IMR-90 (cell line): ENCODE measurements at regions of chr19 and their contacts with region 1.

Region 1: DNA sequence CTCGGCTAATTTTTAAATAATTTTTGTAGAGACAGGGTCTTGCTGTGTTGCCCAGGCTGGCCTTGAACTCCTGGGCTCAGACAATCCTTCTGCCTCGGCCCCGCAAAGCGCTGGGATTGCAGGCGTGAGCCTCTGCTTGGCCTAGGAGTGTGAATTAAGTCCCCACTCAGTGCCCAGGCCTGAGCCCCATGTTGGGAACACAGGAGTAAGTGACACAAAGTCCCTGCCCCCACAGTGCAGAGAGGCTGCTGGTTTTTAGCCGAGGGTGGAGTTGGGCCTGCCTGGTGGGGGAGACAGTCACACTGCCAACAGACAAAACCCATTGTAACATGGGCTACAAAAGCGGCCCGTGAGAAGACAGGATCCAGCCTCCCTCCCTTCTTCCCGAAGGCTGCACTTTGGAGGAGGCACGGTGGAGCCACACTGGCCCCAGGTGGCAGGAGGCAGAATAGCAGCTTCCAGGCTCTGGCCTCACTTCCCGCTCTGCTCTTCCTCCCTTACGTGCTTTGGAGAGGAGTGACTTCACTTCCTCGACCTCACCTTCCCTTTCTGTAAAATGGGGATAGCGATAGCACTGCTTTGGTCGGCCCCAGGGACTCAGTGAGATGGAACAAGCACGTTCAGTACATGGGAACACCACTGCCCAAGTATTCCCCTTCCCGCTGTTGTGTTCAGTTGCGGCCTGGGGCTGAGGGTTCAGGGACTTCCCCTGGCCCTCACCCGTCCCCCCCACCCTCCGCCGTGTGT is 15.2 kb upstream of the EHD2 start:
- DNase-seq: peak; percentile 76
- ATAC-seq: peak; percentile 97
- H3K4me3 ChIP-seq: no peak overlapping the region
- H3K27ac ChIP-seq: no peak overlapping the region
- H3K4me1 ChIP-seq: no peaks in the 10 kb centered on the region
- H3K27me3 ChIP-seq: no peaks in the 10 kb centered on the region
- CTCF ChIP-seq: peak; percentile 99
- POLR2A ChIP-seq: 0 out of 2 replicates have a peak, but pooled peaks have one; percentile 48
- RAD21 ChIP-seq: peak; percentile 100

Region 2: GRCh38 chr19:47305309-47305751 is 392.7 kb before region 1 on chr19:
- CTCF ChIA-PET with region 1: no interaction called
- POLR2A ChIA-PET with region 1: no interaction called
- dilution Hi-C with region 1: no loop called
- in situ Hi-C with region 1: no loop called
- intact Hi-C with region 1: loop called (anchors 5 kb)
- DNase-seq: peak; percentile 90
- ATAC-seq: peak; percentile 98
- H3K4me3 ChIP-seq: peak overlapping the region; percentile 22; the same call in 1 of the 2 replicates
- H3K27ac ChIP-seq: 0 out of 2 replicates have a peak overlapping the region, but pooled peaks have one; percentile 22
- H3K4me1 ChIP-seq: no peaks in the 10 kb centered on the region
- H3K27me3 ChIP-seq: no peaks in the 10 kb centered on the region
- CTCF ChIP-seq: peak; percentile 88
- POLR2A ChIP-seq: no peak
- RAD21 ChIP-seq: peak; percentile 52

Region 3: DNA sequence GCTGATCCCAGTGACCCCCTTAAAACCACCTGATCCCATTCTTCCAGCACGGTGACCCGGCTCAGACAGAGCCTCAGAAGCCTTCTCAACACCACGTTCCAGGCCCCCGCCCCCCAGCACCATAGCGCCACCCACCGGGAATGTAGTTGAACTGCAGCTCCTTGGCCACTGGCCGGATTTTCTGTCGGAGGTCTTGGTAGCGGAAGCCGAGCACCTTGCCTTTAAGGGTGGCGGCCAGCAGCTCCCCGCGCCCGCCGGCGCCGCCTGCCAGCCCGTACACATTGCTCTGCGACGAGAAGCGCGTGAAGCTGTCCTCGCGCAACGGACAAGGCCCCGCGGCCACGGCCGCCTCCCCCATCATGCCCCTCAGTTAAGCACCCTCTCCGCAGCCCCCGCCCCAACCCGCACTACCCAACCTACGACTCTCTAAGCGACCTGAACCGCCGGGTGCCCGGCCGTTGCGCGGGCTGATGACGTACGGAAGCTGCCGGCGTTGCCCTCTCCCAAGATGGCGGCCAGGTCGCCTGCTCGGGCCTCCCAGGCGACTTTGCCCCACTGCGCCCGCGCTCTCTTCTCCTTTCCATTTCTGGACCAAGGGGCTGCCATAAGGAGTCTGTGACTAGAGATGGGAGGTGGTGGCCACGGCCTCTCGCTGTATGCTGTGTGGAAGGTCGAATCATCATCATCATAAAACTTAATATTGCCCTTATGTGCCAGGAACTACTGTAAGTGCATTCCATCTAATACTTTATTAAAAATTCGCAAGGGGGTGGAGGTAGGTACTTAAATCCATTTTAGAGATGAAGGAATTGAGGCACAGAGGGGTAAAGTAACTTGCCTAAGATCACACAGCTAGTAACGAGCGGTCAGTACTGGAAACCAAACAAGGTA is 214.0 kb before region 1 on chr19 and contains the start of gene KPTN:
- CTCF ChIA-PET with region 1: no interaction called
- POLR2A ChIA-PET with region 1: no interaction called
- dilution Hi-C with region 1: no loop called
- in situ Hi-C with region 1: no loop called
- intact Hi-C with region 1: loop called (anchors 1 kb)
- DNase-seq: peak; percentile 90
- ATAC-seq: peak; percentile 91
- H3K4me3 ChIP-seq: peak within 1 kb of the TSS; percentile 64
- H3K27ac ChIP-seq: peak within 1 kb of the TSS; percentile 97
- H3K4me1 ChIP-seq: peaks cover 2% of the 10 kb centered on the region; the same call in 1 of the 2 replicates
- H3K27me3 ChIP-seq: no peaks in the 10 kb centered on the region
- CTCF ChIP-seq: peak; percentile 96
- POLR2A ChIP-seq: peak; percentile 77
- RAD21 ChIP-seq: peak; percentile 57
- total RNA-seq, gene KPTN: 3.9 and 4.1 TPM in 2 replicates

Region 4: GRCh38 chr19:47514869-47515588 is 183.0 kb before region 1 on chr19 and contains the start of gene NAPA:
- CTCF ChIA-PET with region 1: interaction called, 3 read pairs
- POLR2A ChIA-PET with region 1: interaction called, 3 read pairs
- dilution Hi-C with region 1: no loop called
- in situ Hi-C with region 1: no loop called
- intact Hi-C with region 1: loop called (anchors 1 kb)
- DNase-seq: peak; percentile 100
- ATAC-seq: peak; percentile 97
- H3K4me3 ChIP-seq: peak within 1 kb of the TSS; percentile 87
- H3K27ac ChIP-seq: peak within 1 kb of the TSS; percentile 90
- H3K4me1 ChIP-seq: peaks cover 18% of the 10 kb centered on the region
- H3K27me3 ChIP-seq: peaks cover 2% of the 10 kb centered on the region; the same call in 1 of the 2 replicates
- CTCF ChIP-seq: no peak; the same call in 1 of the 2 replicates
- POLR2A ChIP-seq: peak; percentile 96
- RAD21 ChIP-seq: peak; percentile 68
- total RNA-seq, gene NAPA: 51.7 and 76.4 TPM in 2 replicates

Region 5: DNA sequence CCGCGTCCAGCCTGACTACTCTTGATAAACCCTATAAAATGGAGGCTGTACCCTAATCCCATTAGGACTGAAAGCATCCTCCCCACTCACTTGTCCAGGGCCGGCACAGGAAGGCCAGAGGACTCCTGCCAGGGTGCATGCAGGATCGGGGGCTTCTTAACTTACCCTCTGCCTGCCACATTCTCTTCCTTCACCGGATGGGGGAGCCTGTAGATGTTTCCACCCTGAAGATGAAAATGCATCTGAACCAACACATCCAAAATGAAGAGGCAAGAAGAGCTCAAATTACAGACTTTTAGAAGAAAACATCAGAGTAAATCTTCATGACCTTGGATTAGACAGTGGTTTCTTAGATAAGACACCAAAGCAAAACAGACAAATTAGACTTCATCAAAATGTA is 157.3 kb before region 1 on chr19:
- CTCF ChIA-PET with region 1: no interaction called
- POLR2A ChIA-PET with region 1: no interaction called
- dilution Hi-C with region 1: no loop called
- in situ Hi-C with region 1: no loop called
- intact Hi-C with region 1: loop called (anchors 1 kb)
- DNase-seq: peak; percentile 51
- ATAC-seq: peak; percentile 84
- H3K4me3 ChIP-seq: no peak overlapping the region
- H3K27ac ChIP-seq: no peak overlapping the region
- H3K4me1 ChIP-seq: peaks cover 3% of the 10 kb centered on the region
- H3K27me3 ChIP-seq: peaks cover 31% of the 10 kb centered on the region
- CTCF ChIP-seq: peak; percentile 44
- POLR2A ChIP-seq: no peak
- RAD21 ChIP-seq: peak; percentile 39

Region 6: DNA sequence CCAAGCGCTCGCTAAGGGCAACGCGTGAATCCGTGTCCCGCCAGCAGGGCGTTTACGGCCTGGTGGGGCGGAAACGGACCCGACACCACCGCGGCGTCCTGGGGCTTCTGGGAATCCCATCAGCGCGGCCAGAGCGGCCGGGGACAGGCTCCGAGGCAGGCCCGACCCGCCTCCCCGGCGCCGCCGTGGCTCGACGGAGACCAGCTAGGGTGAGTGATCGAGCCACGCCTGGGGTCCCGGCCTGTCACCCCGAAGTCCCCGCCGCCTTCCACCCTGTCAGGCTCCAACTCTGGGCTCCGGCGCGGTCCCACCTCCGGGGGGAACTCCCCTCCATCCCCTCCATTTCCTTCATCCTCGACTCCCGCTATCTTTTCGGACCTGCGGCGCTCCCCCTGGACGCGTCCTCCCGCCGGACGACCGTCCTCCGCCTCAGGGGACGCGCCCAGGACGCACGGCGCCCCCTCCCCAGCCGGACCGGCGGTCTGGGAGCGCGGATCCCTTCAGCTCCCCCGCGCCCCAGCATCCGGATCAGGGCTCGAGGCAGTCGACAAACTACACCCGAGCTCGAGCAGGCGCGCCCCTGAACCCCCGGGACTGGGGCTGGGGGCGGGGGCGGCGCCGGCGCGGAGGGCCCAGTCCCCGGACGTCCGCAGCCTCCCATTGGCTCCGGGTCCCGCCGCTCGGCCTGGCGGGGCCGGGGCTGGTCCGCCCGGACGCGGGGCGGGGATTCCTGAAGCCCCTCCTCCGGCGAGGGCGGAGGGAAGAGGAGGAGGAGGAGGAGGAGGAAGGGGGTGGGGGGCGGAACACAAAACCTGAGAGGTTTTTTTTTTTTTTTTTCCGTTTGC is 89.7 kb before region 1 on chr19:
- CTCF ChIA-PET with region 1: interaction called, 3 read pairs
- POLR2A ChIA-PET with region 1: no interaction called
- dilution Hi-C with region 1: no loop called
- in situ Hi-C with region 1: no loop called
- intact Hi-C with region 1: loop called (anchors 2 kb)
- DNase-seq: peak; percentile 90
- ATAC-seq: peak; percentile 94
- H3K4me3 ChIP-seq: peak overlapping the region; percentile 95
- H3K27ac ChIP-seq: peak overlapping the region; percentile 98
- H3K4me1 ChIP-seq: peaks cover 15% of the 10 kb centered on the region
- H3K27me3 ChIP-seq: no peaks in the 10 kb centered on the region
- CTCF ChIP-seq: peak; percentile 30; the same call in 1 of the 2 replicates
- POLR2A ChIP-seq: peak; percentile 80
- RAD21 ChIP-seq: peak; percentile 26

Region 7: DNA sequence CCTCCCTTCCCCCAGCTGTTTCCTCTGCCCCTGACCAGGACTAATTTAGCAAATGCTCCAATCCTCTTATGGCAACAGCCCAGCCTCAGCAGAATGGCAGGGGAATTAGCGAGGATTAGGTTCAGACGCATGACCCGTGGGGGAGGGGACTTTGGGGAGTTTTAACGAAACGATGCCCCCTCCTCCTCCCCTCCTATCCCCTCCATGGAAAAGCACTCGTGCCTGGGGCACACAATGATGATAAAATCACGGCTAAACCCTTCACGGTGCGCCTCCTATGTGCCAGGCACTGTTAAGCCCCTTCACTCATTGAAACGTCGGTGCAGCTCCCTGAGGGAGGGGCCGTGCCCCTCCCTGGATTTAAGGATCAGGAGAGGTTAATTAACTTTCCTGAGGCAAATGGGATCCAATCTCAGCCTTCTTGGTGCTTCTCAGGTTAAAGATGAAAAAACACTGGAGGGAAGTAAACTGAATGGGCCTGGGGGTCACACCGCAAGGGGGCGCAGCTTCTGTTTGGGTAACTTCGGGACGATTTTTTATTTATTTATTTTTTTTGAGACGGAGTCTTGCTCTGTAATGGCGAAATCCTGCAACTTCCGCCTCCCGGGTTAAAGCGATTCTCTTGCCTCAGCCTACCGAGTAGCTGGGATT is 150.9 kb after region 1 on chr19:
- CTCF ChIA-PET with region 1: no interaction called
- POLR2A ChIA-PET with region 1: no interaction called
- dilution Hi-C with region 1: no loop called
- in situ Hi-C with region 1: no loop called
- intact Hi-C with region 1: no loop called
- DNase-seq: no peak
- ATAC-seq: no peak
- H3K4me3 ChIP-seq: no peak overlapping the region
- H3K27ac ChIP-seq: no peak overlapping the region
- H3K4me1 ChIP-seq: no peaks in the 10 kb centered on the region
- H3K27me3 ChIP-seq: peaks cover 17% of the 10 kb centered on the region
- CTCF ChIP-seq: 0 out of 2 replicates have a peak, but pooled peaks have one; percentile 23
- POLR2A ChIP-seq: no peak
- RAD21 ChIP-seq: no peak